ENCODE measurements at regions of chr1 and their contacts with region 1.

Region 1: DNA sequence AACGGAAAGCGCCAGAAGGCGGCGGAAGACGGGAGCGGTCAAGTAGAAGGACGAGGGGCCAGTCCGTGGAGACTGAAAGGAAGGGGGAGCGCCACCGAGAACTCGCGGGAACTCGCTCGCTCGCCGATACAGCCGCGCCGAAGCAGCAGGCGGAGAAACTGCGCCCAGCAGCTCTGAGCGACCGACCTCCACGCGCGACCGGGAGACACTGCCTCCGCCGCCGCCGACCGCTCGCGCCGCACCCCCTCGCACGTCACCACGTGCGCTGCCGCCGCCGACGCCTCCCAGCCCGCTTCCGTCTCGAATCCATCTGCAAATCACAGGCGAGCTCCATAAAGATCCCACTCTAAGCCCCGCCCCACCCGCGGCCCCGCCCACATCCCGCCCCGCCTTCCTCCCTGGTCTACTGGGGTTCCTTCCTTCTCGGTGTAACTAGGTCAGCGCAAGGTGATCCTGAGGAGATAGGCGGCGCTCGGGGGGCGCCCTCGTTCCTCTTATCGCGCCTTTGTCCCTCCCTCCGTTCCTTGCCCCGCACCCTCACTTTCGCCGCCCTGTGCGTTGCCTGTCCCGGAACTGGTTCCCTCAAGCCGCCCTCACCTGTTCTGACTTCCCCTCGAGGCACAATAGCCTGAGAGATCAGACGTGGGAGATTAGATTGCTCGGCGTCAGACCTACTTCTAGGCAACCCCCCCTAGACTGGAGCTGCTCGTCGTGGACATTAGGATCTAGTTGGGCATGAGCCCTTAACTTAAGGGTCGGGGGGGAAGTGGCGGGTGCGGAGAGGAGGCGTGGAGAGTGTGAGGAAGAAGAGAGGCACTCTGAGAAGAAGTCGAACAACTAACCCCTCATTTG is at the start of gene IVNS1ABP:
- H3K4me3 Mint-ChIP-seq: peak within 1 kb of the TSS; percentile 99
- H3K27ac Mint-ChIP-seq: peak within 1 kb of the TSS; percentile 100
- H3K4me1 Mint-ChIP-seq: peaks cover 34% of the 10 kb centered on the region
- H3K27me3 Mint-ChIP-seq: no peaks in the 10 kb centered on the region

Region 2: DNA sequence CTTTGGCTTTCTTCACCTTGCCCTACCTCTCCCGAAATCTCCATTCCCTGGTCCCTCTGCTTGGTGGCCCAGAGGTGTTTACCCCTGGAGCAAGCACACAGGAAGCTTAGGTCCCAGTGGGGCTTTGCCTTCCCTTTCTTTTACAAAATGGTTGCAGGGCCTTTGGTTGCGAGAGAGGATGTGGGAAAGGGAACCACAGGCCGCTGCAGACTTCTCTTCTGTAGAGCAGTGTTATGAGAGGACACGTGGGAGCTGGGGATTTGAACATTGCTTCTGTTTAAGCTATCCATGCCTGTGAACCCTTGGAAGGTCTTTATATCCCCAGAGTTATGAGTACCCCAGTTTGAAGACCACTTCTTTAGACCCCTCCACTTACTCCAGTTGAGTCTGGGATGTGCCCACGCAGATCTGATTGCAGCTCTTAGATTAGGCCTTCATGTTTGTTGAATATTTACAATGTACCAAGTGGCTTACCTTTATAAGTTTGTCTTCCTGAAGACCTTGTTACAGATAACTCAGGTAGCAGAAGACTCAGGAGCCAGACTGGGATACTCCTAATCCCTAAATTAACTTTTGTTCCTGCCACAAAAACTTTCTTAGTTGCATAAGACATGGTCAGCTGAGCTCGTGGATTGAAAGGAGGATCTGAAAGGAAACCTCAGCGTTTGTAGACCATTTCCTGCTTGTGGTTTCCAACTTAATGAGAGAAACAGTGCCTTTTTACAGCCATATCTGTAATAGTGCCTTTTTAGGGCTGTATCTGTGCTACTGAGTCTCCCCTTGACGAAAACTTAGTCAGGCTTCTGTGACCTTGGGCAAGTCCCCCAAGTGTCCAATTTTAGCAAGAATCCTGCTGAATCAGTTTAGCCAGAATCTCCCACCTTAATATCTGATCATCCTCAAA is 21.7 kb after region 1 on chr1:
- intact Hi-C with region 1: loop called (anchors 1 kb)
- H3K4me3 Mint-ChIP-seq: peak overlapping the region; percentile 44
- H3K27ac Mint-ChIP-seq: peak overlapping the region; percentile 99
- H3K4me1 Mint-ChIP-seq: peaks cover 61% of the 10 kb centered on the region
- H3K27me3 Mint-ChIP-seq: no peaks in the 10 kb centered on the region

Region 3: DNA sequence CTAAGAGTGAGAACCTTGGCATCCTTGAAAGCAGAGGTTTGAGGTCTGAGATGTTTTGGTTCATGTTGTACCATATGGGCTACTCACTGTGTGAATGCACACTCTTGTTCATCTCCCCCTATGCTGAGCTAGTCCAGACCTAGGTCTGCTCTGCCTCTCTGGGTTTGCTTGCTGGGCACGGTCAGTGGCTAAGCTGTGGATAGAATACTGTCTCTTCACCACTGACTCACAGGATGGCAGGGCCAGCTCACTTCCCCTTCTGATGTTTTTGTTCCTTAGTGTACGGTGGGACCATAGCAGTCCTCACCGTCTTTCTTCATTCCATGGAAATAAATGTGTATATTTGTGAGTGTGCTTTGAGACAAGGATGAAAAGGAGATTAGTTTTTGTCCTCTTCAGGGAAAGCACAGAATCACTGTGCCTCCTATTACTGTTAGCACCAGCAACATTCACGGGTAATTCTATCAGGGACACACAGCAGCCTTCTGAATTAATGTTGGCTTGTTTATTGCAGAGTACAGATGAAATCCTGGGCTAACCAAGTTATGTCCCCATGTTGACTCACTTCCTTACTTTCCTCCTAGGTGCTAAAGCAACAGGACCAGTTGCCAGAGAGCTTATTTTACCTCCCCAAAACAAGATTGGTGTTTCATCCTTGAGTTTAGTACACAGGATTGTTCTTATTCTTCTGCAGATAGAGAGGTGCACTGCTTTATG is 56.7 kb after region 1 on chr1:
- intact Hi-C with region 1: loop called (anchors 5 kb)
- H3K4me3 Mint-ChIP-seq: no peak overlapping the region
- H3K27ac Mint-ChIP-seq: peak overlapping the region; percentile 86
- H3K4me1 Mint-ChIP-seq: peaks cover 25% of the 10 kb centered on the region
- H3K27me3 Mint-ChIP-seq: no peaks in the 10 kb centered on the region

Region 4: GRCh38 chr1:185483664-185484450 is 166.6 kb after region 1 on chr1:
- intact Hi-C with region 1: loop called (anchors 1 kb)
- H3K4me3 Mint-ChIP-seq: no peak overlapping the region
- H3K27ac Mint-ChIP-seq: peak overlapping the region; percentile 93
- H3K4me1 Mint-ChIP-seq: peaks cover 52% of the 10 kb centered on the region
- H3K27me3 Mint-ChIP-seq: peaks cover 3% of the 10 kb centered on the region

Measured in dendritic cell treated with granulocyte-macrophage colony-stimulating factor and Interleukin-4, amounts not matched to agents 40 ng/mL and 50 ng/mL, for 4 days (primary cell).